Gastrocnemius medialis (tissue), 4 donors: ENCODE measurements at regions of chr7 and their contacts with region 1.

Region 1: GRCh38 chr7:139538881-139539635 is 15.6 kb downstream of the CLEC2L start:
- DNase-seq: no peak
- ATAC-seq: no peak
- H3K4me3 ChIP-seq: no peak overlapping the region
- H3K27ac ChIP-seq: no peak overlapping the region
- H3K4me1 ChIP-seq: peaks cover 4 to 11% of the 10 kb centered on the region in 2 donors
- H3K27me3 ChIP-seq: no peaks in the 10 kb centered on the region
- CTCF ChIP-seq: no peak
- POLR2A ChIP-seq: no peak

Region 2: DNA sequence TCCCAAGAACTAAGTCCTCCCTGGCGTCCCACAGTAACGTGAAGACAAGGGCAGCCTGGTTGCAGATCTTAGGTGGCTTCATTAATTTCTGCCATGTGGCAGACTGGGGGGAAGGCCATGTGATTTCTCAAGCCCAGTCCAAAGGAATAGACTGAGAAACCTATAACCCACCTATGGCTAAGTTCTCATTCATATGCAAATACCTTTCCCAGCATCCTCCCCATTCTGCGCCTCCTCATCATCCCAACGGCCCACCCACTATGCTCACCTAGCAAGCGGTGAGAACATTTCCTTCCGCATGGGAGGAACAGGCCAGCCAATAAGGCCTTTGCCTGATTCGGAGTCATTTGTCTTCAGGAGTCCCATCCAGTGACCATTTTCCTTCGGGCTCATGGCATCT is 23.8 kb before region 1 on chr7:
- in situ Hi-C with region 1: no loop called
- intact Hi-C with region 1: loop called (anchors 1 kb)
- DNase-seq: no peak
- ATAC-seq: no peak
- H3K4me3 ChIP-seq: no peak overlapping the region
- H3K27ac ChIP-seq: no peak overlapping the region
- H3K4me1 ChIP-seq: no peaks in the 10 kb centered on the region
- H3K27me3 ChIP-seq: no peaks in the 10 kb centered on the region
- CTCF ChIP-seq: no peak
- POLR2A ChIP-seq: no peak